ENCODE measurements at regions of chr5 and their contacts with region 1.

Region 1: DNA sequence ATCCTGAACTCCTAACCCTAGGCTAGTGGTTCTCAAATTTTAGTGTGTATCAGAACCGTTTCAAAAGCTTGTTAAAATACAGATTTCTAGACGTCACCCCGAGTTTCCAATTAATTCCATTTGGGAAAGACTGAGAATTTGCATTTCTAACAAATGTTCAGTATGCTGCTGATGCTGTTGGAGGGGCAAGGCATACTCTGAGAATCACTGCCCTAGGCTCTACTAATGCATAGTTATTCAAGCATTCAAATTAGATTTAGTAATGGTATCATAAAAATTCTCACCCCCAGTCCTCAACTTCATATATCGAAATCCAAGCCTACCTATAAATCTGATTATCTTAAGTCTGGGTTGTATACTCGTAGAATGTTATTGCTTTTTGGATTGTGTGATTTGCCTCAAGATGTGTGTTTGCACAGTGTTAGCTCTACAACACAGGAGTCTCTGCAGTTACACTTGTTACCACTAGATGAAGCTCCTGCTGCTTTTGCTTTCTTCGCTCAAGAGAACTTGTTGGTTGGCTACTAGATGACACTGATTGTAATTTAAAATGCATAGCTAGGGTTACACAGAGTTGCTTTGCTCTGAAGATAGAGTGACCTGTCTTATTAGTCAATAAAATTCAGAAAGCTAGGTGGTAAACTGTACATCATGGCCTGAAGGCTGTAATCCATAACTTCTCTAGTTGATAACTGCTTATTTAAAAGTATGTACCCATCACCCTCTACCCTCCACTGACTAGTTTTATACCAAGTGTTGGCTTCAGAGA is 7.5 kb upstream of the ERAP2 start:
- DNase-seq: peak; percentile 34
- ATAC-seq: peak; percentile 88
- H3K4me3 Mint-ChIP-seq: no peak overlapping the region
- H3K27ac Mint-ChIP-seq: peak overlapping the region; percentile 87
- H3K4me1 Mint-ChIP-seq: peaks cover 44% of the 10 kb centered on the region
- H3K27me3 Mint-ChIP-seq: no peaks in the 10 kb centered on the region
- CTCF ChIP-seq: peak; percentile 87

Region 2: GRCh38 chr5:96370976-96371375 is 497.8 kb before region 1 on chr5:
- CTCF ChIA-PET with region 1: no interaction called
- POLR2A ChIA-PET with region 1: no interaction called
- intact Hi-C with region 1: no loop called
- DNase-seq: no peak
- ATAC-seq: no peak
- H3K4me3 Mint-ChIP-seq: no peak overlapping the region
- H3K27ac Mint-ChIP-seq: no peak overlapping the region
- H3K4me1 Mint-ChIP-seq: peaks cover 3% of the 10 kb centered on the region
- H3K27me3 Mint-ChIP-seq: peaks cover 25% of the 10 kb centered on the region
- CTCF ChIP-seq: no peak

Region 3: GRCh38 chr5:96807075-96807654 is 61.6 kb before region 1 on chr5:
- CTCF ChIA-PET with region 1: interaction called, 17 read pairs
- POLR2A ChIA-PET with region 1: interaction called, 27 read pairs
- intact Hi-C with region 1: no loop called
- DNase-seq: peak; percentile 49
- ATAC-seq: peak; percentile 5
- H3K4me3 Mint-ChIP-seq: peak overlapping the region; percentile 97
- H3K27ac Mint-ChIP-seq: peak overlapping the region; percentile 98
- H3K4me1 Mint-ChIP-seq: peaks cover 66% of the 10 kb centered on the region
- H3K27me3 Mint-ChIP-seq: no peaks in the 10 kb centered on the region
- CTCF ChIP-seq: no peak

Region 4: GRCh38 chr5:96856371-96856770 is 12.4 kb before region 1 on chr5:
- CTCF ChIA-PET with region 1: interaction called, 22 read pairs
- POLR2A ChIA-PET with region 1: no interaction called
- intact Hi-C with region 1: no loop called
- DNase-seq: no peak
- ATAC-seq: no peak
- H3K4me3 Mint-ChIP-seq: no peak overlapping the region
- H3K27ac Mint-ChIP-seq: no peak overlapping the region
- H3K4me1 Mint-ChIP-seq: peaks cover 5% of the 10 kb centered on the region
- H3K27me3 Mint-ChIP-seq: no peaks in the 10 kb centered on the region
- CTCF ChIP-seq: no peak

Region 5: GRCh38 chr5:96924016-96924443 is 55.2 kb after region 1 on chr5:
- CTCF ChIA-PET with region 1: interaction called, 10 read pairs
- POLR2A ChIA-PET with region 1: no interaction called
- intact Hi-C with region 1: no loop called
- DNase-seq: peak; percentile 41
- ATAC-seq: peak; percentile 68
- H3K4me3 Mint-ChIP-seq: no peak overlapping the region
- H3K27ac Mint-ChIP-seq: peak overlapping the region; percentile 83
- H3K4me1 Mint-ChIP-seq: peaks cover 61% of the 10 kb centered on the region
- H3K27me3 Mint-ChIP-seq: no peaks in the 10 kb centered on the region
- CTCF ChIP-seq: no peak

Region 6: GRCh38 chr5:96978812-96979449 is 110.1 kb after region 1 on chr5:
- CTCF ChIA-PET with region 1: interaction called, 12 read pairs
- POLR2A ChIA-PET with region 1: no interaction called
- intact Hi-C with region 1: no loop called
- DNase-seq: no peak
- ATAC-seq: no peak
- H3K4me3 Mint-ChIP-seq: no peak overlapping the region
- H3K27ac Mint-ChIP-seq: peak overlapping the region; percentile 39
- H3K4me1 Mint-ChIP-seq: peaks cover 64% of the 10 kb centered on the region
- H3K27me3 Mint-ChIP-seq: no peaks in the 10 kb centered on the region
- CTCF ChIP-seq: no peak

Region 7: DNA sequence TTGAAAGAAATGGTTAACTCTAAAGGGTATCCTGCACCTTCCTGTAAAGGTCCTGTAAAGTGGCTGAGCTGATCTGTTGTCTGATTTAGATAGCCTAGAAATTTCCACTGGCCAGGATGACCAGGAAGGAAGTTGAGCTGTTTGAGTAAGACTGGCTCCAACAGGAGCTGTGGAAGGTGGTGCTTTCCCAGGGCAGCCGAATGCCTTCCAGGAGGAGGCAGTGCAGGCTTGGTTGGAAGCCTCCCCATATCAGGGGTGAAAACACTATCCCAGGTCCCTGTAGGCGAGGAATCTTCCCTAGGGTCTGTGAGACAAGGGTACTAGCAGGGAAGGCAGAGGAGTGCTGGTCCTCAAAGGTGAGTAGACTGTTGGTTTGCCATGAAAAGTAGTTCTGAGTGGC is 175.3 kb after region 1 on chr5:
- CTCF ChIA-PET with region 1: interaction called, 16 read pairs
- POLR2A ChIA-PET with region 1: no interaction called
- intact Hi-C with region 1: no loop called
- DNase-seq: no peak
- ATAC-seq: no peak
- H3K4me3 Mint-ChIP-seq: no peak overlapping the region
- H3K27ac Mint-ChIP-seq: no peak overlapping the region
- H3K4me1 Mint-ChIP-seq: no peaks in the 10 kb centered on the region
- H3K27me3 Mint-ChIP-seq: no peaks in the 10 kb centered on the region
- CTCF ChIP-seq: no peak